CD14-positive monocyte (primary cell): ENCODE measurements at regions of chr1 and their contacts with region 1.

Region 1: GRCh38 chr1:194295685-194296084 is 1109.3 kb upstream of the B3GALT2 start:
- DNase-seq: no peak
- H3K4me3 ChIP-seq: no peak overlapping the region
- H3K4me3 Mint-ChIP-seq: no peak overlapping the region
- H3K27ac ChIP-seq: no peak overlapping the region
- H3K27ac Mint-ChIP-seq: no peak overlapping the region
- H3K4me1 ChIP-seq: no peaks in the 10 kb centered on the region
- H3K4me1 Mint-ChIP-seq: peaks cover 2% of the 10 kb centered on the region
- H3K27me3 ChIP-seq: no peaks in the 10 kb centered on the region
- H3K27me3 Mint-ChIP-seq: peaks cover 0 to 2% (median 1%) of the 10 kb centered on the region in 3 donors
- CTCF ChIP-seq: peak; percentile 18

Region 2: DNA sequence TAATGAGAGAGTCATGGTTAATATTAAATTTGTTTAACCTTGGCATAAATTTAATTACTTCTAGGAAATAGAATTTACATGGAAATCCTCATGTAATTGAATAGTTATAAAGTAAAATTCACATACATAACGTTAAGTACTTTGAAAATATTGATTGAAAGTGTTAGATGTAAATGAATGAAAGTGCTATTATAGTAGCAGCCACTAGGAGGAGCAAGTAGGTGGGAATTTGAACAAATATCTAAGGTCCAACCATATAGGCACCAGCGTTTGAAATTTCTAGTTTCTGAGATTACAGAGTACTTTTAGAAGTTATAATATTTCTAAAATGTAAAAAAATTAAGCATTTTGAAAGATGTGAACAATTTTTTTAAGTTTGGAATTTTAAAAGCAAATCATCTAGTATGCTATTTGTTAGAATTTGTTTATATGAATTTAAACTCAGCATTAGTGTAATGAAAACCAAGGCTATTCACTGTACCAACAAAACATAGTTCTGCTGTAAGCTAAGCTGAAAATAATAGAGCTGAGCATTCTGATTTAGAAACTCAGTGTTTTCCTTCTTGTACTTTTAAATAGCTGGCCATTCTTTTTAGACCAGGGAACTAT is 1112.6 kb before region 1 on chr1:
- intact Hi-C with region 1: loop called in 1 of 2 experiments (anchors 10 kb)
- DNase-seq: peak; percentile 6 to 48 (median 23)
- H3K4me3 ChIP-seq: no peak overlapping the region
- H3K4me3 Mint-ChIP-seq: no peak overlapping the region
- H3K27ac ChIP-seq: no peak overlapping the region
- H3K27ac Mint-ChIP-seq: no peak overlapping the region
- H3K4me1 ChIP-seq: peaks cover 2 to 5% of the 10 kb centered on the region in 2 donors
- H3K4me1 Mint-ChIP-seq: peaks cover 18% of the 10 kb centered on the region
- H3K27me3 ChIP-seq: no peaks in the 10 kb centered on the region
- H3K27me3 Mint-ChIP-seq: no peaks in the 10 kb centered on the region
- CTCF ChIP-seq: peak; percentile 92

Region 3: DNA sequence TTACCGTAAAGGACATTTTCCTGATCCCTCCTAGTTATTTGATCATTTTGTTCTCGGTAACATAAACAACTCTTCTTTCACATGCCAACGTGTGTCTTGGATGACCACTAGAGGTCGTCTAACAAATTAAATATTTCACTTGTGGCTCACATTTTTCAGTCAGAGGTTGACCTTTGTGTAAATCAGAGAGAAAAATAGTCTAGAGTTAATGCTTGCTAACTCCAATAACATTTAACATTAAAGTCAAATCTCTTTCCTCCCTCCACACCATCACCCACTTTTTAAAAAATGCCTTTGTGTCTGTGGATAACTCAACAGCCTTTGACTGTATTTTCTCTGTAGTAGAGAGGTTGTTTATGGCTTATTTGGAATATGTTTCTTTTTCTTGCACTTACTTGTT is 888.8 kb before region 1 on chr1:
- intact Hi-C with region 1: loop called in 1 of 2 experiments (anchors 5 kb)
- DNase-seq: peak; percentile 6 to 37 (median 19)
- H3K4me3 ChIP-seq: no peak overlapping the region
- H3K4me3 Mint-ChIP-seq: no peak overlapping the region
- H3K27ac ChIP-seq: no peak overlapping the region
- H3K27ac Mint-ChIP-seq: no peak overlapping the region
- H3K4me1 ChIP-seq: no peaks in the 10 kb centered on the region
- H3K4me1 Mint-ChIP-seq: peaks cover 5% of the 10 kb centered on the region
- H3K27me3 ChIP-seq: no peaks in the 10 kb centered on the region
- H3K27me3 Mint-ChIP-seq: no peaks in the 10 kb centered on the region
- CTCF ChIP-seq: peak; percentile 82

Region 4: GRCh38 chr1:194318790-194319280 is 23.1 kb after region 1 on chr1:
- intact Hi-C with region 1: no loop called
- DNase-seq: no peak
- H3K4me3 ChIP-seq: no peak overlapping the region
- H3K4me3 Mint-ChIP-seq: no peak overlapping the region
- H3K27ac ChIP-seq: no peak overlapping the region
- H3K27ac Mint-ChIP-seq: no peak overlapping the region
- H3K4me1 ChIP-seq: no peaks in the 10 kb centered on the region
- H3K4me1 Mint-ChIP-seq: no peaks in the 10 kb centered on the region
- H3K27me3 ChIP-seq: no peaks in the 10 kb centered on the region
- H3K27me3 Mint-ChIP-seq: no peaks in the 10 kb centered on the region
- CTCF ChIP-seq: no peak

Region 5: GRCh38 chr1:194387531-194387930 is 91.8 kb after region 1 on chr1:
- intact Hi-C with region 1: no loop called
- DNase-seq: no peak
- H3K4me3 ChIP-seq: no peak overlapping the region
- H3K4me3 Mint-ChIP-seq: no peak overlapping the region
- H3K27ac ChIP-seq: no peak overlapping the region
- H3K27ac Mint-ChIP-seq: no peak overlapping the region
- H3K4me1 ChIP-seq: no peaks in the 10 kb centered on the region
- H3K4me1 Mint-ChIP-seq: no peaks in the 10 kb centered on the region
- H3K27me3 ChIP-seq: no peaks in the 10 kb centered on the region
- H3K27me3 Mint-ChIP-seq: no peaks in the 10 kb centered on the region
- CTCF ChIP-seq: no peak